B cell (primary cell): ENCODE measurements at regions of chr4 and their contacts with region 1.

Region 1: GRCh38 chr4:55345980-55346850 is at the start of gene SRD5A3:
- DNase-seq: peak; percentile 85
- ATAC-seq: peak; percentile 89
- H3K4me3 ChIP-seq: peak within 1 kb of the TSS; percentile 56 to 84 (median 73)
- H3K4me3 Mint-ChIP-seq: peak within 1 kb of the TSS; percentile 85
- H3K27ac ChIP-seq: peak within 1 kb of the TSS; percentile 69 to 85
- H3K27ac Mint-ChIP-seq: peak within 1 kb of the TSS; percentile 94
- H3K4me1 ChIP-seq: peaks cover 4 to 9% of the 10 kb centered on the region in 2 donors
- H3K4me1 Mint-ChIP-seq: peaks cover 10% of the 10 kb centered on the region
- H3K27me3 ChIP-seq: no peaks in the 10 kb centered on the region
- H3K27me3 Mint-ChIP-seq: no peaks in the 10 kb centered on the region
- CTCF ChIP-seq: peak; percentile 99
- total RNA-seq, gene SRD5A3: 3.6 and 4.0 TPM in 2 replicates

Region 2: DNA sequence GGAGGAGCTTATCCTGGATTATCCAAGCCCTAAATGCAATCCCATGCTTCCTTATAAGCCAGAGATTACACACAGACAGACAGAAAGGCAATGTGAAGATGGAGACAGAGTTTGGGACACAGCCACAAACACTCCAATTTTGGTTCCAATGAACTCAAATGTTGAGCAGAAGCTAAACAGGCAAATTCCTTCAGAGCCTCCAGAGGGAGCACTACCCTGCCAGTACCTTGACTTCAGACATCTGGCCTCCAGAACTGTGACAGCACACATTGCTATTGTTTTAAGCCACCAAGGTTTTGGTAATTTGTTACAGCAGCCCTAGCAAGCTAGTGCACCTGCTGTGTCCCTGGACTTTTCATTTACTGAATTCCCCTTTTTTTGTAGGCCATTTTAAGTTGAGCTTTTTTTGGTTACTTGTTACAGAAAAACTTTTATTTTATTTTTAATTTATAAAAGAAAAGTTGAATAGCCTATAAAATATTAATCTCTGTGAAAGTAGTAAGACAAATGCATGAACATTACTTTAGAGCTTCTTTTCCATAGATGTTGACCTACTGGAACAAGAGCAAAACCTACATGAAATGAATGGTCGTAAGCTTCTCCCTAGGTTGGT is 33.6 kb before region 1 on chr4:
- CTCF ChIA-PET with region 1: interaction called, 10 read pairs
- POLR2A ChIA-PET with region 1: no interaction called
- intact Hi-C with region 1: no loop called
- DNase-seq: peak; percentile 34
- ATAC-seq: peak; percentile 39
- H3K4me3 ChIP-seq: no peak overlapping the region
- H3K4me3 Mint-ChIP-seq: no peak overlapping the region
- H3K27ac ChIP-seq: no peak overlapping the region
- H3K27ac Mint-ChIP-seq: no peak overlapping the region
- H3K4me1 ChIP-seq: no peaks in the 10 kb centered on the region
- H3K4me1 Mint-ChIP-seq: no peaks in the 10 kb centered on the region
- H3K27me3 ChIP-seq: no peaks in the 10 kb centered on the region
- H3K27me3 Mint-ChIP-seq: peaks cover 17% of the 10 kb centered on the region
- CTCF ChIP-seq: peak; percentile 53

Region 3: GRCh38 chr4:55356991-55357461 is 10.8 kb after region 1 on chr4:
- CTCF ChIA-PET with region 1: interaction called, 13 read pairs
- POLR2A ChIA-PET with region 1: no interaction called
- intact Hi-C with region 1: no loop called
- DNase-seq: no peak
- ATAC-seq: no peak
- H3K4me3 ChIP-seq: no peak overlapping the region
- H3K4me3 Mint-ChIP-seq: no peak overlapping the region
- H3K27ac ChIP-seq: no peak overlapping the region
- H3K27ac Mint-ChIP-seq: no peak overlapping the region
- H3K4me1 ChIP-seq: peaks cover 5 to 8% of the 10 kb centered on the region in 2 donors
- H3K4me1 Mint-ChIP-seq: peaks cover 12% of the 10 kb centered on the region
- H3K27me3 ChIP-seq: no peaks in the 10 kb centered on the region
- H3K27me3 Mint-ChIP-seq: no peaks in the 10 kb centered on the region
- CTCF ChIP-seq: no peak

Region 4: GRCh38 chr4:55378617-55379463 is 32.6 kb after region 1 on chr4:
- CTCF ChIA-PET with region 1: no interaction called
- POLR2A ChIA-PET with region 1: no interaction called
- intact Hi-C with region 1: no loop called
- DNase-seq: no peak
- ATAC-seq: no peak
- H3K4me3 ChIP-seq: no peak overlapping the region
- H3K4me3 Mint-ChIP-seq: no peak overlapping the region
- H3K27ac ChIP-seq: no peak overlapping the region
- H3K27ac Mint-ChIP-seq: no peak overlapping the region
- H3K4me1 ChIP-seq: no peaks in the 10 kb centered on the region
- H3K4me1 Mint-ChIP-seq: no peaks in the 10 kb centered on the region
- H3K27me3 ChIP-seq: no peaks in the 10 kb centered on the region
- H3K27me3 Mint-ChIP-seq: no peaks in the 10 kb centered on the region
- CTCF ChIP-seq: no peak

Region 5: GRCh38 chr4:55853484-55854046 is 507.4 kb after region 1 on chr4 and contains the start of gene EXOC1:
- CTCF ChIA-PET with region 1: no interaction called
- POLR2A ChIA-PET with region 1: interaction called, 5 read pairs
- intact Hi-C with region 1: loop called (anchors 2 kb)
- DNase-seq: peak; percentile 97
- ATAC-seq: peak; percentile 100
- H3K4me3 ChIP-seq: peak within 1 kb of the TSS; percentile 85 to 98 (median 97)
- H3K4me3 Mint-ChIP-seq: no peak within 1 kb of the TSS
- H3K27ac ChIP-seq: peak within 1 kb of the TSS; percentile 71 to 86
- H3K27ac Mint-ChIP-seq: peak within 1 kb of the TSS; percentile 94
- H3K4me1 ChIP-seq: peaks cover 11 to 12% of the 10 kb centered on the region in 2 donors
- H3K4me1 Mint-ChIP-seq: peaks cover 13% of the 10 kb centered on the region
- H3K27me3 ChIP-seq: peaks cover 0 to 14% (median 2%) of the 10 kb centered on the region in 4 experiments
- H3K27me3 Mint-ChIP-seq: peaks cover 12% of the 10 kb centered on the region
- CTCF ChIP-seq: no peak
- total RNA-seq, gene EXOC1: 42.5 and 46.7 TPM in 2 replicates